Activated CD4-positive, alpha-beta memory T cell treated with anti-CD3 and anti-CD28 coated beads for 36 hours (primary cell): ENCODE measurements at regions of chr1 and their contacts with region 1.

Region 1: GRCh38 chr1:89687254-89687653 is 54.3 kb downstream of the LRRC8C start:
- DNase-seq: no peak
- H3K4me3 Mint-ChIP-seq: no peak overlapping the region
- H3K27ac Mint-ChIP-seq: peak overlapping the region; percentile 88
- H3K4me1 Mint-ChIP-seq: peaks cover 74% of the 10 kb centered on the region
- H3K27me3 Mint-ChIP-seq: no peaks in the 10 kb centered on the region

Region 2: GRCh38 chr1:89675677-89676076 is 11.6 kb before region 1 on chr1:
- CTCF ChIA-PET with region 1: interaction called, 3 read pairs
- POLR2A ChIA-PET with region 1: interaction called, 3 read pairs
- intact Hi-C with region 1: loop called (anchors 1 kb)
- DNase-seq: no peak
- H3K4me3 Mint-ChIP-seq: no peak overlapping the region
- H3K27ac Mint-ChIP-seq: peak overlapping the region; percentile 83
- H3K4me1 Mint-ChIP-seq: peaks cover 86% of the 10 kb centered on the region
- H3K27me3 Mint-ChIP-seq: no peaks in the 10 kb centered on the region